PC-9 (cell line): ENCODE measurements at regions of chr11 and their contacts with region 1.

Region 1: DNA sequence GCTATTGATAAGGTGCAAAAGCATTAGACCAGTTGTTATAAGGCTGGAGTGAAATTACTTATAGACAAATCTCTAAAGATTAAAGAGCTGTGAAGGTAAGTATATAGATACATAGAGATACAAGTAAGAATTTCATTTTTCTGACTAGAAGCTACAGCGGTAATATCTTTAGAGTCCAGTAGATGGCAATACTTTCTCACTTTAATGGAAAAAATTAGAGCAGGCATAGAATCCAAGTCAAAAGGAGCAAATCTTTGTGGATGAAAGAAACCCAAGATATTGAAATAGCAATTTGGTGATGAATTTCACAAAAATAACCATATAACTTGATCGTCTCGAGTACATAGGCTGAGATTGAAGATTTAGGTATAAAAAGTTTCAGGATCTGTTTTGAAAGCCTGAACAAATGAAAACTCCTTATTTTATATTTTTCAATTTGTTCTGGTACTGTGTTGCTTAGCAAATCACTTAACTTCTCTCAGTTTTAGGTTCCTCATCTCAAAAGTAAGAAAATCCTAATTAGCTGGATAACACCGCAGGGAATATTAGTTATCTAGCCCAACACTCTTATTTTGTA is 81.9 kb downstream of the UVRAG start:
- DNase-seq: peak in 1 of 2 experiments; percentile 64
- H3K4me3 ChIP-seq: no peak overlapping the region
- H3K27ac ChIP-seq: no peak overlapping the region
- H3K4me1 ChIP-seq: no peaks in the 10 kb centered on the region
- H3K27me3 ChIP-seq: no peaks in the 10 kb centered on the region
- CTCF ChIP-seq: peak; percentile 95

Region 2: GRCh38 chr11:75342903-75343870 is 553.7 kb before region 1 on chr11:
- CTCF ChIA-PET with region 1: interaction called, 10 read pairs
- POLR2A ChIA-PET with region 1: no interaction called
- intact Hi-C with region 1: no loop called
- DNase-seq: peak in 1 of 2 experiments; percentile 83
- H3K4me3 ChIP-seq: no peak overlapping the region
- H3K27ac ChIP-seq: no peak overlapping the region
- H3K4me1 ChIP-seq: peaks cover 93% of the 10 kb centered on the region
- H3K27me3 ChIP-seq: no peaks in the 10 kb centered on the region
- CTCF ChIP-seq: no peak

Region 3: GRCh38 chr11:75678620-75679259 is 218.2 kb before region 1 on chr11:
- CTCF ChIA-PET with region 1: no interaction called
- POLR2A ChIA-PET with region 1: interaction called, 16 read pairs
- intact Hi-C with region 1: no loop called
- DNase-seq: no peak
- H3K4me3 ChIP-seq: no peak overlapping the region
- H3K27ac ChIP-seq: no peak overlapping the region
- H3K4me1 ChIP-seq: no peaks in the 10 kb centered on the region; the same call in 1 of the 2 replicates
- H3K27me3 ChIP-seq: peaks cover 25% of the 10 kb centered on the region; the same call in 1 of the 2 replicates
- CTCF ChIP-seq: no peak

Region 4: DNA sequence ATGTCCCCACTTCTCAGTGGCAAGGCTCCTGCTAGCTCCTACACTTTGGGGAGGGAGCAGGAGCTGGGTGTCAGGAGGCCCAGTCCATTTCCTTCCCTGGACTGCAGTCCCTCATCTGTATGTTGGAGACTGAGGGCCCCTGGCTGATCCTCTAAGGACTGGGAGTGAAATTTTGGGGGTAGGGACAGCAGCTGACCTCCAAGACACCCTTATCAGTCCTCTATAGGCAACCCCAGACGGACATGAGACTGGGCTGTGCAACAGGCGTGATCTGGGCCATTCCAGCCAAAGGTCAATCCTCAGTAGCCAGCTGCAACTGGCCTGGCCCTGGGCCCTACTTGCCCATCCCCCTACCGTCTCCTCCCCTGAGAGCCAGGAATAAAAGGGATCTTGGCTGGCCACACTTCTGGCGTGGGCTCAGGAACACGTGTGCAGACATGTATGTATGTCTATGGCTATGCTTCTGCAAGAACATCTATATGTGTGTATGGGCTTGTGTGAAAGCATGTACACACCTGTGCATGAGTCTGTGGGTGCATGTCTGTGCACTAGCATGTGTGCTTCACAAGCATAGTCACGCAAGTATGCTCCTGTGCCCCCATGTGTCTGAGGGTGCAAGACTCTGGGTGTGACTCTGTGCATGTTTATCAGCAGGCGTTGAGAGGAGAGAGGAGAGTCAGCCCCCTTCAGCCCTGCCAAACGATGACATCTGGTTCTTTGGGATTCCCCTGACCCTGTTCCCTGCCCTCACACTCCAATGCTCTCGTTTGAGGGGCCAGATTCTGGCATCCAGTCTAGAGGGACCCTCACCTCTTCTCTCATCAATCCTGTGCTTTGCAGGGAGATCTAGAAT is 153.0 kb before region 1 on chr11:
- CTCF ChIA-PET with region 1: interaction called, 13 read pairs
- POLR2A ChIA-PET with region 1: no interaction called
- intact Hi-C with region 1: no loop called
- DNase-seq: no peak
- H3K4me3 ChIP-seq: no peak overlapping the region
- H3K27ac ChIP-seq: no peak overlapping the region
- H3K4me1 ChIP-seq: no peaks in the 10 kb centered on the region
- H3K27me3 ChIP-seq: no peaks in the 10 kb centered on the region
- CTCF ChIP-seq: no peak

Region 5: DNA sequence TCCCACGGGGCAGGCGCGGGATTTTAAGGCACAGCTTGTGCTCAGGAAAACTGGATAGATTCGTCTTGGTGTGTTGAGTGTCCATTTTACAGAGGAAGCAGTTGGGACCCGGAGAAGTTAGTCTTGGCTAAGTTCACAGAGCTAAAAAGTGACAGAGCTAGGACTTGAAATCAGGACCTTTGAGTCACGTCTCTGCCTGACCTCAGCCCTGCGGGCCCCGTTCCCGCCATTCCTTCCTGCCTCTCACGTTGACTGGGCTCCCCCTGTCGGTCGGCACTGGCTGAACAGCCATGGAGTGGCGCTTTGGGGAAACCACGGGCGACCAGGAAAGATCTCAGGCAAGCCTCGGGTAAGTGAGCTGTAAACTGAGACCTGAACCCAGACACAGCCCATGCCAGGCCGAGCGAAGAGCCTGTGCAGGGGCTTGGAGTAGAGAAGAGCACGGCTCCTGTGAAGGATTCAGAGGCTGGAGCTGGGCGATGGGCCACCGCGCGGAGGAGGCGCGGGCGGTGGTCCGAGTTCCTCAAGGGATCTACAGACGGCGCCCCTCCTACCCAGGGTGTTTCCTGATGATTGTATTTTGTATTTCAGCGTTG is 255.3 kb after region 1 on chr11:
- CTCF ChIA-PET with region 1: interaction called, 12 read pairs
- POLR2A ChIA-PET with region 1: no interaction called
- intact Hi-C with region 1: loop called (anchors 1 kb)
- DNase-seq: peak in 1 of 2 experiments; percentile 76
- H3K4me3 ChIP-seq: no peak overlapping the region
- H3K27ac ChIP-seq: peak overlapping the region; percentile 88
- H3K4me1 ChIP-seq: peaks cover 37% of the 10 kb centered on the region
- H3K27me3 ChIP-seq: no peaks in the 10 kb centered on the region
- CTCF ChIP-seq: peak; percentile 72

Region 6: GRCh38 chr11:76512851-76513653 is 616.1 kb after region 1 on chr11:
- CTCF ChIA-PET with region 1: no interaction called
- POLR2A ChIA-PET with region 1: no interaction called
- intact Hi-C with region 1: loop called (anchors 1 kb)
- DNase-seq: peak in 1 of 2 experiments; percentile 38
- H3K4me3 ChIP-seq: no peak overlapping the region
- H3K27ac ChIP-seq: 0 out of 2 replicates have a peak overlapping the region, but pooled peaks have one; percentile 8
- H3K4me1 ChIP-seq: no peaks in the 10 kb centered on the region
- H3K27me3 ChIP-seq: no peaks in the 10 kb centered on the region
- CTCF ChIP-seq: peak; percentile 69

Region 7: GRCh38 chr11:76686261-76687079 is 789.5 kb after region 1 on chr11:
- CTCF ChIA-PET with region 1: no interaction called
- POLR2A ChIA-PET with region 1: no interaction called
- intact Hi-C with region 1: loop called (anchors 5 kb)
- DNase-seq: no peak
- H3K4me3 ChIP-seq: no peak overlapping the region
- H3K27ac ChIP-seq: no peak overlapping the region
- H3K4me1 ChIP-seq: no peaks in the 10 kb centered on the region
- H3K27me3 ChIP-seq: no peaks in the 10 kb centered on the region
- CTCF ChIP-seq: no peak